ENCODE measurements at regions of chr4 and their contacts with region 1.

Region 1: DNA sequence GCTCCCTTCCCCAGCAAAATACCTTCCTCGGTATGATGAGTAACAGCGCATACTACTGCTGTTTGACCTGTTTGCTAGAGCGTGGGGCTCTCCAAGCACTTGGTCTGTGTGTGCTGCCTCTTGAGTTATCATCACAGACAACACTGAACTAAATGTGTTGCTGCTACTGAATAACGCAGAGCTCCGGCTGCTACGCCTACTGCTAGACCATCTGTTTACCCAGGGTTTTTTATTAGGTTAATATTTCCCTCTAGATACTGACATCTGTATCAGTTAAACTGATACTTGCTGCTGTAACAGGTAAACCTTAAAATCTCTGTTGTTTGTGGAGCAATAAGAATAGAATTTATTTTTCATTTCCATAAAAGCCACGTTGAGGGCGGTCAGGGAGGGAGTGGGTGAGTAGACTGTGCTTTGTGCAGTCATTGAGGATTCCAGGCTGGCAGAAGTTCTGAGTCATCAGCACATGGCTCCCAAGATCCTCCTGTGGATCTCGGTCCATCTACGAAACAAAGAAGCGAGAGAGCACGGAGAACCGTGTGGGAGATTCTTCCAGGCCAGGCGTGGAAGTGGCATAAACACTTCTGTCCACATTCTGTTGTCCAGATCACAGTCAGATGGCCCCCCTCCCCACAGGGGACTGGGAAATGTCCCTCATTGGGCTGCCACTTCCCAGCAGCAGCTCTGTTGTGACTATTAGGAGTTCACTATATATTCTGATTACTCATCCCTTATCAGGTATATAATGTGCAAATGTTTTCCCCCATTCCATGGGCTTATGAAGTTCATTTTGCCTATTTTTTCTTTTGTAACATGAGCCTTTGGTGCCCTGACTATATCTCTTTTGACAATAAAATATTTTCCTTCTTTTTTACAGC is 14.1 kb downstream of the GRK4 start:
- DNase-seq: no peak
- H3K4me3 ChIP-seq: no peak overlapping the region
- H3K27ac ChIP-seq: no peak overlapping the region
- H3K4me1 ChIP-seq: no peaks in the 10 kb centered on the region
- H3K27me3 ChIP-seq: no peaks in the 10 kb centered on the region
- CTCF ChIP-seq: no peak
- POLR2A ChIP-seq: no peak

Region 2: DNA sequence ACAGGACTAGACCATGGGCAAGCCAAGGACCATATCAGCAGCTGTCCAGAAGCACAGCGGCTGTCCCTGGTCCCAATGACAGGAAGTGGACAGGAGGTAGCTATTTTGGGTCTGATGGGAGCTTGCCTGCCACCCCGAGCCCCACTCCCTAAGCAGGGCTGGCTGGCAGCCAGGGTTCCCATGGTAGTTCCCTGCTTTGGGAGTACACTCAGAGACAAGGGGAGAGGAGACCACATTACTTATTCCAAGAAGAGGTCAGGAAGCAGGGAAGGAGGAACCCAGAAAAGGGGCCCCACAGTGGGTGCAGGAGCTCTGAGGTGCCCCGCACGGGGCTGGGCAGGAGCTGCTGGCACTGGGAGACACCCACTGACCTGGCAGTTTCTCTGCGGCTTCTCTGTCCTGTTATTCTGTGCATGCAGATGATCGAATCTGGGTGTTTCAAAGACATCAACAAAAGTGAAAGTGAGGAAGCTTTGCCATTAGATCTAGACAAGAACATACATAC is 60.6 kb after region 1 on chr4:
- intact Hi-C with region 1: loop called in 1 of 2 experiments (anchors 5 kb)
- DNase-seq: peak in 2 of 7 donors; percentile 13 to 14
- H3K4me3 ChIP-seq: peak overlapping the region in 1 of 4 donors; percentile 18
- H3K27ac ChIP-seq: no peak overlapping the region
- H3K4me1 ChIP-seq: peaks cover 10 to 24% of the 10 kb centered on the region in 2 donors
- H3K27me3 ChIP-seq: no peaks in the 10 kb centered on the region
- CTCF ChIP-seq: no peak
- POLR2A ChIP-seq: no peak

Region 3: DNA sequence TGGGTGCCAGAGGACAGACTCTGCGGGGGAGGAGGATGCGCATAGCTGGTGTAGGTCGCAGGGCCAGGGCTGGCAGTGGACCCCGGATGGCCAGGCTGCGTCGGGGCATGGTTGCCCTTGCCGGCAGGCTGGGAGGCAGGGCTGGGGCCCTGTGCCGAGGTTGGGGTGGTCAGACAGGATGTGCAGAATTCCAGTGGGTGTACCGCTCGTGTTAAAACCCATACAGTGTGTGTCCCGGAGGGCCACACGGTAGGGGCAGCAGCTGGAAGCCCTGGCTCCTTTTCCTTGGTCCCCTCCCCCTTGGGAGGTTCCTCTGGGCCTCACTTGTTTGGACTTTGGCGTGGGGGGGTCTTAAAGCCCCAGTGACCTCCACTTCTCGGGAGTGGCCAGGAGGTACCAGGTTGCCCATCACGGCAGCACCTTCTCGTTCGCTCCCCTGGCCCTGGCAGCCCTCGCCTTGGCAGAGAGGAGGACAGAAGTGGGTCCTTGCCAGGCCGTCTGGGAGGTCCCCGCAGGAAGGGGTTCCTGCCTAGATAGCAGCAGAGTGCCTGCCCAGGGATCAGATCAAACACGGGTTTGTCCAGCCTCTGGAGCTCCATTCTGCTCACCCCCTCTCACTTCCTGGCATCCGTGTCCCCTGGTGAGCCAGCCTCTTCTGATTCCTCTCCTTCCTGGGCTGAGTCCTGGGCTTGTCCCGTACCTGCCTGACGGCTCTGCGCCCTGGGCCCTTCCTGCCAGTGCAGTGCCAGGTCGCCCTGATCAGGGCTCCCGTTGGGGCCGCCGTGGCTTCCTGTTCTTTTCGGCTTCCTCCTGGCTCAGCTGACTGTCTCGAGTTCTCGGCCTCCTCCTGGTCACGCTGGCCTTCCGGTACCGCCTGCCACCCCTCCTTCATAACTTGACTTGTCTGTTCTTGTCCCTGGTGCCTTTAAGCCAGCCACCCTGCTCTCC is 407.6 kb after region 1 on chr4:
- intact Hi-C with region 1: no loop called
- DNase-seq: peak in 5 of 7 donors; percentile 58 to 67 (median 62)
- H3K4me3 ChIP-seq: peak overlapping the region in 1 of 4 donors; percentile 26
- H3K27ac ChIP-seq: peak overlapping the region in 4 of 5 donors; percentile 50 to 89 (median 74)
- H3K4me1 ChIP-seq: peaks cover 4 to 12% of the 10 kb centered on the region in 2 donors
- H3K27me3 ChIP-seq: no peaks in the 10 kb centered on the region
- CTCF ChIP-seq: no peak
- POLR2A ChIP-seq: peak in 1 of 2 donors; percentile 15

Measured in adrenal gland (tissue), 19 donors.